Calu3 (cell line): ENCODE measurements at regions of chr5 and their contacts with region 1.

Region 1: DNA sequence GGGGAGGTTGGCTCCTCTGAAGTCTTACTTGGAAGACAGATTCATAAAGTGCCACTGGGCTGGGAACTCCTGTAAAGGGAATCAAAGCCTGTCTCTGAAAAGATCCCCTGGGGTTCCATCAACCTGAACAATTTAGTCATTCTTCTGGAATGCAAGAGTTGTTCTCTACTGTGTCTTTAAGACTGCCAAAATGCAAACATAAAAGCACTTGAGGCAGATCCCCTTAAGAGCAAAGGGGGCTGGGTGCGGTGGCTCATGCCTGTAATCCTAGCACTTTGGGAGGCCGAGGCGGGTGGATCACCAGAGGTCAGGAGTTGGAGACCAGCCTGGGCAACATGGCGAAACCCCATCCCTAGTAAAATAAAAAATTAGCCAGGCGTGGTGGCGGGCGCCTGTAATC is 16.7 kb downstream of the CDKN2AIPNL start:
- DNase-seq: no peak
- H3K4me3 Mint-ChIP-seq: no peak overlapping the region
- H3K27ac Mint-ChIP-seq: no peak overlapping the region
- H3K4me1 Mint-ChIP-seq: no peaks in the 10 kb centered on the region
- H3K27me3 Mint-ChIP-seq: no peaks in the 10 kb centered on the region
- CTCF ChIP-seq: no peak

Region 2: GRCh38 chr5:134420343-134420742 is 25.4 kb after region 1 on chr5:
- CTCF ChIA-PET with region 1: no interaction called
- intact Hi-C with region 1: loop called (anchors 1 kb)
- DNase-seq: no peak
- H3K4me3 Mint-ChIP-seq: no peak overlapping the region
- H3K27ac Mint-ChIP-seq: no peak overlapping the region
- H3K4me1 Mint-ChIP-seq: peaks cover 10% of the 10 kb centered on the region
- H3K27me3 Mint-ChIP-seq: no peaks in the 10 kb centered on the region
- CTCF ChIP-seq: no peak

Region 3: GRCh38 chr5:134503088-134503946 is 108.4 kb after region 1 on chr5:
- CTCF ChIA-PET with region 1: no interaction called
- intact Hi-C with region 1: no loop called
- DNase-seq: peak; percentile 95
- H3K4me3 Mint-ChIP-seq: peak overlapping the region; percentile 19
- H3K27ac Mint-ChIP-seq: peak overlapping the region; percentile 94
- H3K4me1 Mint-ChIP-seq: peaks cover 46% of the 10 kb centered on the region
- H3K27me3 Mint-ChIP-seq: no peaks in the 10 kb centered on the region
- CTCF ChIP-seq: no peak